ENCODE measurements at regions of chr11 and their contacts with region 1.

Region 1: GRCh38 chr11:17077520-17078401 is at the start of gene RPS13:
- DNase-seq: peak; percentile 91 to 99 (median 94)
- ATAC-seq: peak; percentile 92
- H3K4me3 ChIP-seq: peak within 1 kb of the TSS; percentile 83
- H3K27ac ChIP-seq: peak within 1 kb of the TSS; percentile 96
- H3K4me1 ChIP-seq: peaks cover 6 to 17% of the 10 kb centered on the region in 2 experiments; a peak in 3 of 5 replicates
- H3K27me3 ChIP-seq: no peaks in the 10 kb centered on the region
- CTCF ChIP-seq: no peak
- EP300 ChIP-seq: peak; percentile 62
- POLR2A ChIP-seq: peak; percentile 99
- RAD21 ChIP-seq: no peak
- polyA plus RNA-seq, gene RPS13: 3,147 to 3,714 TPM

Region 2: DNA sequence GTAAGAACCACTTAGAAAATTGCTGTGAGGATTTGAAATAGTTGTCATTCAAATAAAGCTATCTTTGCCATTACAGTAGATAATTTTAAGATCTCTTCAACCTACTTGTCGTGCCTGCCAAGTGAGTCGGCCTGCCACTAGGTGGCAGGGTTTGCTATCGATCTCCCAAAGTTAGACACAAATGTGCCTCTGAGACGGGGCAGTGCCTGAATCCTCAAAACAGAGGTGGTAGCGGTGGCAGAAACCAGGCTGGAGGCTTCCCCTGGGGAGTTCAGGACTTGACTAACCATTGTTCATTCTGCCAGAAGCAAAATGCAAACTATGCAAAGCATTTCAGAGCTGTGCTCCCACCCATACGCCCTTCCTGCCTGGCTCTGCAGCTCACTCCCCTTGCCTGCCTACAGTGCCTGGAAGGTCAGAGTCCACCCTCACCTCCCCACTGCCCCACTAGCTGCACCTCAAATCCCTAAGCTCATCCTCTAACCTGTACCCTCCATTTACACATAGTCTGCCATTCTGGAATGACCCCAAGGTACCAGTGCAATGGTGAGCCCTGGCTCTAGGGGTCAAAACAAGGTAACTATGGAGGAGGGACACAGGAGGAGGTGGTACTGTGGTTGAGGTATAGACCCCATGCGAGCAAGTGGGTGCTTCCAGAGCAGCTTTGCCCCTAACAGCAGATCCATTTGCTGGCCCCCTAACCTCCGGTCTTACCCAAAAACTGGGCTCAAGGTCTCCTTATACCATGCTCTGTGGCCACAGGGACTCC is 257.3 kb before region 1 on chr11:
- CTCF ChIA-PET with region 1: no interaction called
- POLR2A ChIA-PET with region 1: interaction called, 3 read pairs
- in situ Hi-C with region 1: no loop called
- intact Hi-C with region 1: loop called (anchors 10 kb)
- DNase-seq: peak; percentile 69 to 82 (median 70)
- ATAC-seq: peak; percentile 92
- H3K4me3 ChIP-seq: no peak overlapping the region
- H3K27ac ChIP-seq: no peak overlapping the region
- H3K4me1 ChIP-seq: peaks cover 0 to 5% of the 10 kb centered on the region in 2 experiments; a peak in 1 of 5 replicates
- H3K27me3 ChIP-seq: peaks cover 26 to 34% of the 10 kb centered on the region in 2 experiments
- CTCF ChIP-seq: peak; percentile 80 to 91 (median 87)
- EP300 ChIP-seq: no peak
- POLR2A ChIP-seq: no peak
- RAD21 ChIP-seq: peak; percentile 70 to 88

Region 3: GRCh38 chr11:17063171-17064002 is 14.4 kb before region 1 on chr11:
- CTCF ChIA-PET with region 1: no interaction called
- POLR2A ChIA-PET with region 1: interaction called, 10 read pairs
- in situ Hi-C with region 1: no loop called
- intact Hi-C with region 1: no loop called
- DNase-seq: peak; percentile 58 to 64 (median 60)
- ATAC-seq: peak; percentile 97
- H3K4me3 ChIP-seq: no peak overlapping the region
- H3K27ac ChIP-seq: no peak overlapping the region
- H3K4me1 ChIP-seq: no peaks in the 10 kb centered on the region
- H3K27me3 ChIP-seq: no peaks in the 10 kb centered on the region
- CTCF ChIP-seq: peak; percentile 70 to 80 (median 73)
- EP300 ChIP-seq: no peak
- POLR2A ChIP-seq: no peak
- RAD21 ChIP-seq: peak; percentile 78 to 91

Region 4: DNA sequence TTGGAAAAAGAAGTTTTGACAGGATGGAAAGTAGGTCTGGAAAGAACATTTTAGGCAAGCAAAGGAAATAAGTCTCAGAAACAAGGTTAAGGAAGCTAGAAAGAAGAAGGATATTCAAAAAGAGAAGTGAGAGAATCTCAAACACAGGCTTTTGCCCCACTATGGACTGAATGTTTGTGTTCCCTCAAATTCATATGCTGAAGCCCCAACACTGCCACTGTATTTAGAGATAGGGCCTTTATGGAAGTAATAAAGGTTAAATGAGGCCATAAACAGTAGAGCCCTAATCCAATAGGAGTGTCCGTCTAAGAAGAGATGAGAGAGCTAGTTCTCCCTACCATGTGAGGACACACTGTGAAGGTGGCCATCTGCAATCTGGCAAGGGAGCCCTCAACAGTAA is 20.3 kb after region 1 on chr11:
- CTCF ChIA-PET with region 1: no interaction called
- POLR2A ChIA-PET with region 1: interaction called, 29 read pairs
- in situ Hi-C with region 1: no loop called
- intact Hi-C with region 1: no loop called
- DNase-seq: no peak
- ATAC-seq: no peak
- H3K4me3 ChIP-seq: no peak overlapping the region
- H3K27ac ChIP-seq: no peak overlapping the region
- H3K4me1 ChIP-seq: no peaks in the 10 kb centered on the region
- H3K27me3 ChIP-seq: no peaks in the 10 kb centered on the region
- CTCF ChIP-seq: no peak
- EP300 ChIP-seq: no peak
- POLR2A ChIP-seq: no peak
- RAD21 ChIP-seq: no peak

Region 5: DNA sequence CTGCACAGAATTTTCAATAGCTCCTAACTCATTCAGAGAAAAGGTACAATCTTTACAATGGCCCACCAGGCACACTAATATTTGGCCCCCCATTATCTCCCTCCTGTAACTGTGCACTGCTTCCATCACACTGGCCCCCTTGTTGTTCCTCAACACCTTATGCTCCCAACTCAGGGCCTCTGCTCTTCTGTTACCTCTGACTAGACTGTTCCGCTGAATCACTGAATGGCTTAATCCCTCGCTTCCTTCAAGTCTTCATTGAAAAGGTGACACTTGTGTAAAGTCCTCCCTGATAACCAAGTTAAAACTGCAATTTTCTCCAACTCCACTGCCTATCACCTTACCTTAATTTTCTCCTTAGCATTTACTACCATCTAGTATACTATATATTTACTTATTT is 108.2 kb after region 1 on chr11:
- CTCF ChIA-PET with region 1: no interaction called
- POLR2A ChIA-PET with region 1: interaction called, 3 read pairs
- in situ Hi-C with region 1: no loop called
- intact Hi-C with region 1: loop called (anchors 2 kb)
- DNase-seq: peak in 1 of 4 experiments; percentile 31
- ATAC-seq: peak; percentile 54
- H3K4me3 ChIP-seq: no peak overlapping the region
- H3K27ac ChIP-seq: no peak overlapping the region
- H3K4me1 ChIP-seq: peaks cover 10 to 19% of the 10 kb centered on the region in 2 experiments
- H3K27me3 ChIP-seq: no peaks in the 10 kb centered on the region
- CTCF ChIP-seq: no peak
- EP300 ChIP-seq: no peak
- POLR2A ChIP-seq: no peak
- RAD21 ChIP-seq: no peak

Region 6: DNA sequence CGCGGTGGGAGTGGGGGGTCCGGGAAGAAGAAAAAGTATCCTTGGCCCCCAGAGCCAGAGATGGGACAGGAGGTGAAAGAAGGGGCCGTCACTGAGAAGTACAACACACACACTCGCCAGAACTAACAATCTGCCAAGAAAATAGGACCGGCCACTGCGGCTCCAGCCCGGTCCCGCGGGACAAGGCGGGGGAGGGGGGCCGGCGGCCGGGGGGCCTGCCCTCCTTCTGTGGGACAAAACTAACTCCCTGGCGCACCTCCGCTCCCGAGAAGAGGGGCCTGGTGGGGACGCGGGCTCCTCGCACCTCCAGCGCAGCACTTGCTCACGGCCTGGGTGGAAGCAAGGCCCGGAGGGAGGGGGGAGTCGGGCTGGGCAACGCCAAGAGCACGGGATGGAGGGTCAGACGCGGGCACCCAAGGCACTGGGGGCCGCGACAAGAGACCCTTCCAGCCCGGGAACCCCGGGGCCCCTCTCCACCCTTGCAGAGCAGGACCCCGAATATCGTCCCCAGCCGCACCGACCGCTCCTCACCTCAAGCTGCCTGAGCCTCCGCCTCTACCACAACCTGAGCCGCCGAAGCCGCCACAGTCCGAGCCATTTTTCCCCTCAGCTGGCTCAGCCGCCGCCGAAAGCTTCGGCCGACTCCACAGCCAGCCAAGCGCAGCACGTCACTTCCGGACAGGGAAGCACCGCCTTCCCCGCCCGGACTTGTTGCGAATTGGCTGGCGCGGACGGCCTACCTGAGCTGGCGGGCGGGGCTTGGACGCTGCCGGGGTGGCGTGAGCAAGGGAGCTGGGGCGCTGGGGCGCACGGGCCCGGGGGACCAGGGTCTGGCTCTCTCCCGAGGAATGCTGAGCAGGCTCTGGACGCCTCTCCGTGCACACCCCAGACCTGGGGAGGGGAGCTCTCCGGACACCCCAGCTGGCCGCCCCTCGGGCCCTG is 129.8 kb after region 1 on chr11 and contains the start of gene PIK3C2A:
- CTCF ChIA-PET with region 1: no interaction called
- POLR2A ChIA-PET with region 1: interaction called, 11 read pairs
- in situ Hi-C with region 1: no loop called
- intact Hi-C with region 1: loop called (anchors 5 kb)
- DNase-seq: peak; percentile 92 to 97 (median 93)
- ATAC-seq: peak; percentile 96
- H3K4me3 ChIP-seq: peak within 1 kb of the TSS; percentile 87
- H3K27ac ChIP-seq: peak within 1 kb of the TSS; percentile 76
- H3K4me1 ChIP-seq: peaks cover 11 to 13% of the 10 kb centered on the region in 2 experiments; a peak in 4 of 5 replicates
- H3K27me3 ChIP-seq: no peaks in the 10 kb centered on the region
- CTCF ChIP-seq: no peak
- EP300 ChIP-seq: no peak
- POLR2A ChIP-seq: peak; percentile 93
- RAD21 ChIP-seq: no peak
- polyA plus RNA-seq, gene PIK3C2A: 3.1 to 4.1 TPM